ENCODE measurements at regions of chr4 and their contacts with region 1.

Region 1: GRCh38 chr4:165096776-165097175 is 15.9 kb downstream of the TMEM192 start:
- DNase-seq: no peak
- H3K4me3 ChIP-seq: no peak overlapping the region
- H3K27ac ChIP-seq: no peak overlapping the region
- H3K4me1 ChIP-seq: no peaks in the 10 kb centered on the region
- H3K27me3 ChIP-seq: no peaks in the 10 kb centered on the region
- CTCF ChIP-seq: peak; percentile 20 to 41 (median 30)
- POLR2A ChIP-seq: no peak

Region 2: DNA sequence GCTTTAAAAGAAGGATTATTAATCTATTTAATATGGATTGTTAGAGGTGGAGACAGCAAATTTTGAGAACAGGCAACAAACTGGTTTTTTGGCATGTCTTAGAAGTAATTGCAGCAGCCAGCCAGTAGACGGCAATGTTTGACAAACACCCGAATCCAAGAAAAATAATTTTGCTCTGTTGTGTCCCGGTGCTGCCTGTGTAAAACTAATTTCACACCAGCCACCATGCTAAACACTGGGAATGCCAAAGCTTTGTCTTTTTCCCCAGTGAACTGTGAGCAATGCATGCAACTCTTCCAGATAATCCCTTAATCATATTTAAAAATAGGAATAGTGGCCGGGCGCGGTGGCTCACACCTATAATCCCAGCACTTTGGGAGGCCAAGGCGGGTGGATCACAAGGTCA is 317.0 kb before region 1 on chr4:
- intact Hi-C with region 1: loop called (anchors 10 kb)
- DNase-seq: peak; percentile 15
- H3K4me3 ChIP-seq: no peak overlapping the region
- H3K27ac ChIP-seq: no peak overlapping the region
- H3K4me1 ChIP-seq: no peaks in the 10 kb centered on the region
- H3K27me3 ChIP-seq: no peaks in the 10 kb centered on the region
- CTCF ChIP-seq: peak; percentile 29 to 77 (median 62)
- POLR2A ChIP-seq: no peak